ENCODE measurements at regions of chr10 and their contacts with region 1.

Region 1: DNA sequence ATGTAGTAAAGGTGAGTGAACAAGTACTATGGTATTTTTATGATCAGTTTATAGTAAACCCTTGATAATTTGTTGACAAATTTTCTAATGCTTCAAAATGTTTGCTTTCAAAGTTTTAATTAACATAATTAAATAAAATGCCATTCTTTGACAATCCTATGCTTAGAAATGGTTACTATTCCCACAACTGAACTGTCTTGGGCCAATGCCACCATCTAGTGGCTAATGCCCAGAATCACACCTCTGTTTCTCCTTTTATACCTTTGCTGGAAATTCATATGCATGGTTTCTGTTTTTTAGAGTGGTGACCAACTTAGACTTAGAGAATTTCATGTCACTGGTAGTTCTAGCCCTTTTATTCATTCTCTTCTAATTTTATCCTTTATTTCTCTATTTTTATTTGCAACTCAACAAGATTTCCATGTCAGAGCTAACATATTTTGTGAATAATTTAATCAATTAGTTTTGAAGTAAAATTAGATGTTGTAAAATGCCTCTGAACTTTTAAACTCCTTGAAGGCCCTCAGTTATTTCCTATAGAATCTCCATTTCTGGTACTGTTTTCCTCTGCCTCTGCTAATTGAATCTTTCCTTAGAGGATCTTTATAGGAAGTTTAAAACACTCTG is 31.1 kb downstream of the PCGF5 start:
- DNase-seq: peak; percentile 61
- ATAC-seq: peak; percentile 64
- H3K4me3 Mint-ChIP-seq: no peak overlapping the region
- H3K27ac Mint-ChIP-seq: no peak overlapping the region
- H3K4me1 Mint-ChIP-seq: peaks cover 6% of the 10 kb centered on the region
- H3K27me3 Mint-ChIP-seq: no peaks in the 10 kb centered on the region

Region 2: DNA sequence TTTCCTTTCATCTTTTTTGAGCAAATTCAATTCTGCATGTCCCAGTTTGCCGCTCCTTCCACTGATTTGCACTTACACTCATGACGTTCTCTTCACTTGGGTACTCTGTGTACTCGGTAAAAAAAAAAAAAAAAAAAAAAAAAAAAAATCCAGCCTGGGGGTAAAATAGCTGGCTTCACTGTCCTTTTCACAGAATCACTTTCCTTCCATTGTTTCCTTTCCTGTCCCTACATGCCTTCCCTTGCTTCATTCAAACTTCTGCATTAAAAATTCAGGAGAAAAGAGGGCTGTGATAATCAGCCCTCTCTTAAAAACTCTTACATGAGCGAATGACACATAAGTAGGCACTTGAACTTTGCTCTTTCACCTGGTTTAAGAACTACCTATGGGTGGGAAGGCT is 339.4 kb before region 1 on chr10:
- CTCF ChIA-PET with region 1: interaction called, 32 read pairs
- DNase-seq: no peak
- ATAC-seq: no peak
- H3K4me3 Mint-ChIP-seq: no peak overlapping the region
- H3K27ac Mint-ChIP-seq: no peak overlapping the region
- H3K4me1 Mint-ChIP-seq: peaks cover 3% of the 10 kb centered on the region
- H3K27me3 Mint-ChIP-seq: peaks cover 10% of the 10 kb centered on the region

Region 3: DNA sequence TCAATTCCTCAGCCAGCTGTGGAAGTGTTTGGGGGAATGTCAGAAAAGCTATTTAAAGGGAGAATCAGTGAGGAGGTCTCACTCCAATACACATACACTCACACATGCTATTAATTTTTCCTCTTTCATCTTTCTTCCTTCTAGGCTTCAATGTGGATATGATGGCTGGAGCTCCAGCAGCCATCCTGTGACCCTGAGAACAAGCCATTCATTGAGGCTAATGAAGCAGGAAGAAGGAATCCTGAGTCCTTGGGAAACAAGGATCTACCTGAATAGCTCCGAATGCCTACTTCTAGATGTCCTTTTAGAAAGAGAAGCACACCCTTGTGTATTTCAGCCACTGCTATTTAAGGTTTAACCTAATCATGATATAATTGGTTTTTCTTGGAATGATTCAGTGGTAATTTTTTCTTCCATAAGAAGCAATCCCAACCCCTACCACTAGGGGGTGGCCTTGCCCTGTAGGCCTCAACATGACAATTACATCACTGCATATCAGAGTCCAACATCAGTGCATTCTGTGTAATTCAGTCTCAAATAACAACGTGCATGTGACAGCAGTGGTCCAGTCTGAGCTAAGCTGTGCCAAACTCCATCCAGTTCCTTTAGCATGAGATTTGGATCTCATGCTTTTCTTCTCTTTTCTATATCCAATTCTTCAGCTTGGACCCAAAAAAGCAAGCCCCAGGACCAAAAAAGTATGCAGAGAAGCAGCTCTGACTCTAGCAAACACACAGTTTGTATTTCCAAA is 245.4 kb before region 1 on chr10:
- CTCF ChIA-PET with region 1: interaction called, 59 read pairs
- DNase-seq: peak; percentile 75
- ATAC-seq: peak; percentile 71
- H3K4me3 Mint-ChIP-seq: peak overlapping the region; percentile 33
- H3K27ac Mint-ChIP-seq: peak overlapping the region; percentile 66
- H3K4me1 Mint-ChIP-seq: peaks cover 31% of the 10 kb centered on the region
- H3K27me3 Mint-ChIP-seq: peaks cover 33% of the 10 kb centered on the region

Region 4: DNA sequence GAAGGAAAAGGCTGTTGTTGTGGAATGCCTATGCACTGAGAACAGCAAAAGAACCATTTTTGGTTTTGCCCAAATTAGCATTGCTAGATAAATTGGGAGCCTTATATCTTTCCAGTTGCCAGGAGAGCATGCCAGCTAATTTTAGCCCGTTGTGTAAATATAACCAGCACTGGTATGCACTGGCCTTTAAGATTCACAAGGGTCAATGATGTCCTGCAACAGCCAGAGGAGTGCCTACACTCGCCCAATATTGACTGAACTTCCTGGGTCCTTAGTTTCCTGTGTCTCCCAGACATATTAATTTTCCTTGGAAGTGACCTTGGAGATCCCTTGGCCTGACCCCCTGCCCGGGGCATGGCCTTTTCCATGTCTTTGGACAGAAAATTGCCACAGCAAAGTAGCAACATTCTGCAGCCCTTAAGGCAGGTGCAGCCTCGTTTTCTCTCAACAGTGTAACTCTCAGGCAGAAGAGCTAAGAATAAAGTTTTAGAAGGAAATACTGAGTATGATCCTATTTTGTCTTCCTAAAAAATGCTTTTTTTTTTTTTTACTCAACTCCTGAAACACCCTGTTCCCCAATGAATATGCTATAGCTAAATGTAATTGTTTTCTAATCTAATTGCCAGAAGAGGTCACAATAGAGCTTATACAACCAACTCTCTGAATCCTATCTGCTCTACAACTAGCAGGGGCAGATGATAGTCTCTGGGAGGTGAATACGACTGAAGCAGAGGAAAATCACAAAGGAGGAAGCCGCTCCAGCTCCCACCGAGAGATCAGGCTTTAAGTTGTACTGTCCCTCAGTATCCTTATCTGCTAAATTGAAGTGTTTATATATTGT is 163.0 kb before region 1 on chr10:
- CTCF ChIA-PET with region 1: interaction called, 13 read pairs
- DNase-seq: no peak
- ATAC-seq: peak; percentile 47
- H3K4me3 Mint-ChIP-seq: no peak overlapping the region
- H3K27ac Mint-ChIP-seq: no peak overlapping the region
- H3K4me1 Mint-ChIP-seq: no peaks in the 10 kb centered on the region
- H3K27me3 Mint-ChIP-seq: no peaks in the 10 kb centered on the region

Region 5: GRCh38 chr10:91163269-91163868 is 88.2 kb before region 1 on chr10:
- CTCF ChIA-PET with region 1: interaction called, 10 read pairs
- DNase-seq: peak; percentile 85
- ATAC-seq: peak; percentile 66
- H3K4me3 Mint-ChIP-seq: peak overlapping the region; percentile 74
- H3K27ac Mint-ChIP-seq: peak overlapping the region; percentile 83
- H3K4me1 Mint-ChIP-seq: peaks cover 30% of the 10 kb centered on the region
- H3K27me3 Mint-ChIP-seq: no peaks in the 10 kb centered on the region

Region 6: DNA sequence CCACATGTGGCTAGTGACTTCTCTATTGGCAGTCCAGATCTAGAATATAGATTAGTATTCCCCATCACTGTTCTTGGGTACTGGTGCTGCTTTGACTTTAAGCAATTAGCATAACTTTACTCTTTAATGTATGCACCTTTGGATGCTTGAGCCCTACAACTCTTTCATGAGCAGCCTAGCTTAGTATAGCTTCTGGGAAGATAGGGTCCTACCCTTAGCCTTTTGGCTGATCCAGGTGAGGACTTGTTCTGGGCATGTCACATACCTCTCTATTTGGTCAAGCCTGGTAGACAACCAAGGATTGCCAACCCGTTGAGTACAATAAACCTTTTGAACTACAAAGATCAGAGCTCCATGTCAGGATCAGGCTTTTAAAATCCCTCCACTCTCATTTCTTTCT is 13.4 kb before region 1 on chr10:
- CTCF ChIA-PET with region 1: interaction called, 14 read pairs
- DNase-seq: no peak
- ATAC-seq: no peak
- H3K4me3 Mint-ChIP-seq: no peak overlapping the region
- H3K27ac Mint-ChIP-seq: no peak overlapping the region
- H3K4me1 Mint-ChIP-seq: peaks cover 22% of the 10 kb centered on the region
- H3K27me3 Mint-ChIP-seq: no peaks in the 10 kb centered on the region

Measured in activated CD8-positive, alpha-beta memory T cell treated with anti-CD3 and anti-CD28 coated beads, Interleukin-2, amount 10 ng/mL, durations not matched to agents 7 days and 5 days (primary cell).